Activated T-helper 1 cell treated with anti-CD3 and anti-CD28 coated beads, Interleukin-12 subunit alpha, Interleukin-12 subunit beta, Interleukin-2, Interleukin-4 antibody, amounts not matched to agents 30 ng/mL and 10 ng/mL and 1 ng/mL, durations not matched to agents 14 hours and 24 hours and 36 hours (primary cell): ENCODE measurements at regions of chr16 and their contacts with region 1.

Region 1: DNA sequence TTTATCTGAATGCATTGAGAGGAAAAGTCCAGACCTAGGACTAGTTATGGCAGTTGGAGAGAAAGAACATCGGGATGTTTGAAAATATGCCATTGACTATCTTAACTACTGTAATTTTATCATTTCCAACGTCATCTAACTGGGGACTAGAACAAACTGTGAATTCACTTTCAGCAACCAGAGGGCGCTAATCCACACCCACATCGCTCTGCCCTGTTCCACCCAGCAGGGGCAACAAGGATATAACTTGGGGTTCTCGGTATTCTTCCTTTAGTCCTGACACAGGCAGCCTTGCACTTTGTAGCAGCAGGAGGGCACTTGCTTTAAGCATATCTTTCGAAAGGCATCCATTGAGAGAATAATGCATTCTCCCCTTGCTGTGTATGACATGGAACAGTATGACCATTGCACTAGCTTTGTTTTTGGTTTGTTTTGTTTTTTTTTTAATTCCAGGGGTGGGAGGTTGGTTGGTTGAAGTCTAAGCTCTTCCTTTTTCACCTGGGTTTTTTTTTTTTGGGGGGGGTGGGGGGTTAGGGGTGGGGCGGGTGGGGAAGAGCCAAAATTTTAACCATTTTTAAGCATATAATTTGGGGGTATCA is 31.5 kb downstream of the SIAH1 start:
- DNase-seq: peak; percentile 62
- H3K4me3 Mint-ChIP-seq: no peak overlapping the region
- H3K27ac Mint-ChIP-seq: peak overlapping the region; percentile 32
- H3K4me1 Mint-ChIP-seq: peaks cover 15% of the 10 kb centered on the region
- H3K27me3 Mint-ChIP-seq: no peaks in the 10 kb centered on the region

Region 2: DNA sequence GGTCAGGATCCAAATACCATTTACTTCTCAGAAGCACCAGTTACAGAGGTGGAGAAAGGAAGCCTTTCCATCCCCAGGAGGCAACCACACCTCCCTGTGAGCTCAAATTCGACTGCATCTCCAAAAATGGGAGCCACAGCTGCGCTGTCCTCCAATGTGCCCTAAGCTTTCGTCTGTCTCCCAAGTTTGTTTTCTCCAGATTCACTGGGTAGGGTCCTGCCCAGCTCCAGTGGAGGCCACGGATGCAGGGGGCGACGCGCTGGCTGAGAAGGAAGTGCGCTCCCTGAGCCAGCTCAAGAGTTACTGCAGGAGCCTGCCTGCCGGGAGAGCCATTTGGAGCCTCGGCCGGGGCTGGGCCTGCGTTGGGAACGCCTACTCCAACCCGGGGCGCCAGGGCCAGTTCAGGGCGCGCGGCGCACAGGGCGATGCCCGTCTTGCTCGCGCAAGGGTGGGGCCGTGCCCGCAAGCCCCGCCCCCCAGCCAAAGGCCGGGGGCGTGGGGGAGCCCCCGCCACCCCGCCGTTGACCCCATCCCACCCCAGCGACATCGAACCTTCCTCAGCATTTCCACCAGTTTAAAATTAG is 12.0 kb after region 1 on chr16:
- intact Hi-C with region 1: loop called (anchors 1 kb)
- DNase-seq: peak; percentile 80
- H3K4me3 Mint-ChIP-seq: peak overlapping the region; percentile 90
- H3K27ac Mint-ChIP-seq: peak overlapping the region; percentile 96
- H3K4me1 Mint-ChIP-seq: peaks cover 59% of the 10 kb centered on the region
- H3K27me3 Mint-ChIP-seq: no peaks in the 10 kb centered on the region

Region 3: GRCh38 chr16:48385272-48386150 is 31.8 kb after region 1 on chr16 and contains the start of gene SIAH1:
- intact Hi-C with region 1: loop called (anchors 5 kb)
- DNase-seq: peak; percentile 85
- H3K4me3 Mint-ChIP-seq: peak within 1 kb of the TSS; percentile 97
- H3K27ac Mint-ChIP-seq: peak within 1 kb of the TSS; percentile 95
- H3K4me1 Mint-ChIP-seq: peaks cover 29% of the 10 kb centered on the region
- H3K27me3 Mint-ChIP-seq: peaks cover 3% of the 10 kb centered on the region
- total RNA-seq, gene SIAH1: 15.6 and 16.8 TPM in 2 replicates

Region 4: GRCh38 chr16:48434653-48435317 is 81.1 kb after region 1 on chr16:
- intact Hi-C with region 1: no loop called
- DNase-seq: no peak
- H3K4me3 Mint-ChIP-seq: no peak overlapping the region
- H3K27ac Mint-ChIP-seq: no peak overlapping the region
- H3K4me1 Mint-ChIP-seq: peaks cover 10% of the 10 kb centered on the region
- H3K27me3 Mint-ChIP-seq: peaks cover 15% of the 10 kb centered on the region

Region 5: DNA sequence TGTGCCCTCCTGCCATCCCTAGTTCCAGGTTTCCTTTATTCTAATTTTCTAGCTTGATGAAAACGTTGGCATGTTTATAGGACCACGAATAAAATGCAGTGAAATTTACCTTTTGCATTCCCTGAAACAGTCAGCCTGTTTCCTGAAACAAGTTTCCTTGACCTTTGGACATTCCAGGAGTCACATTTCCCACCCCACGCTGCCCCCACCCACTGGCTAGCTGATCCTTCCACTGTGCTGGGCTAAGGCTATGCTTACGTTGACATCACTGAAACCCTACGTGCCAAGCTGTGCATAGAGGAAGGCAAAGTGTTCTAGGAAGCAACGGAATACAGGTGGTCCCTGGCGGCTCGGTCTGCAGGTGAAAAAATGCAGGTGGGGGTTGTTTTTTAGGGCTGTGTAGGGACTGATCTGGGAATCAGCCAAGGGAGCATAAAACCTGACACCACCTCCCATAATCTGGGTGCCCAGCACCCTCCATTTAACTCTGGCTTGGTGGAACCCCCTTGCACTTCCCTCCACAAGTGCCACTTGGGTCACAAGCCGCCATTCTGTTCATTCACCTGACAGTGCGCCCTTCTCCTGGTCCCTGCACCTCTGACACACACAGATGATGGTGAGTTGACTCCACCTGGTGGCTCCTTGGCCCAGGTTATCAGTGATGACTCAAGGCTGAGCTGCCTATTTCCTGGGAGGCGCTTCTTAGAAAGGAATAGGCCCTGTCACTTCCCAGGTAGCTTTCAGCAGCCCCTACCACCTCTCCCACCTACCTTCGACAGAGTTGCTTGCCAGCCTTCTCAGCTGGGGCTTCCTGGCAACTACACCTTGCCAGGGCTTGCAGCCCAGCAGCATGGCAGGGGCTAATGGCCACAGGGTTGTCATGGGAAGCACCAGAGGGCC is 172.6 kb after region 1 on chr16:
- intact Hi-C with region 1: loop called (anchors 1 kb)
- DNase-seq: no peak
- H3K4me3 Mint-ChIP-seq: no peak overlapping the region
- H3K27ac Mint-ChIP-seq: no peak overlapping the region
- H3K4me1 Mint-ChIP-seq: peaks cover 7% of the 10 kb centered on the region
- H3K27me3 Mint-ChIP-seq: no peaks in the 10 kb centered on the region

Region 6: GRCh38 chr16:48542020-48542473 is 188.4 kb after region 1 on chr16:
- intact Hi-C with region 1: loop called (anchors 1 kb)
- DNase-seq: no peak
- H3K4me3 Mint-ChIP-seq: no peak overlapping the region
- H3K27ac Mint-ChIP-seq: peak overlapping the region; percentile 29
- H3K4me1 Mint-ChIP-seq: peaks cover 20% of the 10 kb centered on the region
- H3K27me3 Mint-ChIP-seq: no peaks in the 10 kb centered on the region

Region 7: DNA sequence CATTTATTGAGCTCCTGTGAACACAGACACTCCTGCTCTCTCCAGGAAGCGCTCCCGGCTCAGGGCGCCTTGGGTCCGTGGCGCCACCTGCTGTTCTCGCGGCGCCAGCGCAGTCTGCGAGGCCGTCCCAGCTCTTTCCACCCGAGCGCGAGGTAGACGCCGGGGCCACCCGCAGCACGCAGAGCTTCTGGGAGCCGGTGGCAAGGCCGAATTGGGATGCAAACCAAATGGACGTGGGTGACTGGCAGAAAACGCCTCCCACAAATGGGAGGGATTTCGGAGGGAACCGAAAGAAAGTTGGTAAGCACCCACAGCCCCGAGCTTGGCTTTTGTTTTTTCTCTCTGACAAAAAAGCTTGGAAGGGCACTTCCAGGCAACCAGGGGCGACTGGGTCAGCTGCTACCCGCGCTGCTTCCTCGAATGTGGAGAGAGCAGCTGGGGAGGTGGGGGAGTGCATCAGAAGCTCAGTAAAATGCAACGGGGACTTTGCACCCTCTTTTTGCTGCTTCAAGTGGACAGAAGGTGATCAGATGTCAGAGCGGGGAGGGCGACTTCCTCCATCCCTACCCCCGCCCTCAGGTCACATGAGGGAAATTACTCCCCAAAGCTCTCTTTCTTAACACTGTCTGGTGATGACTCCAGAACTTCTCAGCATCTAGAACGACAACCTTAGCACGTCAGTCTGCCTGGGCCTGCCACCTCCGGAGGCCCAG is 269.8 kb after region 1 on chr16:
- intact Hi-C with region 1: loop called (anchors 1 kb)
- DNase-seq: peak; percentile 77
- H3K4me3 Mint-ChIP-seq: peak overlapping the region; percentile 81
- H3K27ac Mint-ChIP-seq: peak overlapping the region; percentile 72
- H3K4me1 Mint-ChIP-seq: peaks cover 42% of the 10 kb centered on the region
- H3K27me3 Mint-ChIP-seq: peaks cover 8% of the 10 kb centered on the region

Region 8: DNA sequence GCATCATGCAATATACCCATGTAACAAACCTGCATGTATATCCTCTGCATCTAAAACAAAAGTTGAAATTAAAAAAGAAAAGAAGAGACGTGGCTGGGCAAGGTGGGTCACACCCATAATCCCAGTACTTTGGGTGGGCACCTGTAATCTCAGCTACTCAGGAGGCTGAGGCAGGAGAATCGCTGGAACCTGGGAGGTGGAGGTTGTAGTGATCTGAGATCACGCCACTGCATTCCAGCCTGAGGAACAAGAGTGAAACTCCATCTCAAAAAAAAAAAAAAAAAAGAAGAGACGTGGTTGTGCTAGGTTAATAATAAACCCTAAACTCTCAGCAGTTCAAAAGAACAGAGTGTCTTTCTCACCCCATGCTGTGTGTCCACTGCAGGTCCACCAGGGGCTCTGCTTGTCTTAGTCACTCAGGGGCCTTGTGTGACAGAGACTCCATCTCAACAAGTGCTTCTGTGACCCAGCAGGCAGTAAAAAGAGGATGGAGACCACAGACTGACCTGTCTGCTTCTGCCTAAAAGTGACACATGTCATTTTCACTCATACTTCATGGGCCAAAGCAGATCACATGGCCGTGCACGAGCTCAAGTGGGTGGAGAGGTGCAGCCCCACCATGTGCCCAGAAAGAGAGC is 278.6 kb after region 1 on chr16:
- intact Hi-C with region 1: loop called (anchors 1 kb)
- DNase-seq: no peak
- H3K4me3 Mint-ChIP-seq: no peak overlapping the region
- H3K27ac Mint-ChIP-seq: no peak overlapping the region
- H3K4me1 Mint-ChIP-seq: peaks cover 11% of the 10 kb centered on the region
- H3K27me3 Mint-ChIP-seq: peaks cover 11% of the 10 kb centered on the region